Left lung (tissue), 14 donors: ENCODE measurements at regions of chr3 and their contacts with region 1.

Region 1: DNA sequence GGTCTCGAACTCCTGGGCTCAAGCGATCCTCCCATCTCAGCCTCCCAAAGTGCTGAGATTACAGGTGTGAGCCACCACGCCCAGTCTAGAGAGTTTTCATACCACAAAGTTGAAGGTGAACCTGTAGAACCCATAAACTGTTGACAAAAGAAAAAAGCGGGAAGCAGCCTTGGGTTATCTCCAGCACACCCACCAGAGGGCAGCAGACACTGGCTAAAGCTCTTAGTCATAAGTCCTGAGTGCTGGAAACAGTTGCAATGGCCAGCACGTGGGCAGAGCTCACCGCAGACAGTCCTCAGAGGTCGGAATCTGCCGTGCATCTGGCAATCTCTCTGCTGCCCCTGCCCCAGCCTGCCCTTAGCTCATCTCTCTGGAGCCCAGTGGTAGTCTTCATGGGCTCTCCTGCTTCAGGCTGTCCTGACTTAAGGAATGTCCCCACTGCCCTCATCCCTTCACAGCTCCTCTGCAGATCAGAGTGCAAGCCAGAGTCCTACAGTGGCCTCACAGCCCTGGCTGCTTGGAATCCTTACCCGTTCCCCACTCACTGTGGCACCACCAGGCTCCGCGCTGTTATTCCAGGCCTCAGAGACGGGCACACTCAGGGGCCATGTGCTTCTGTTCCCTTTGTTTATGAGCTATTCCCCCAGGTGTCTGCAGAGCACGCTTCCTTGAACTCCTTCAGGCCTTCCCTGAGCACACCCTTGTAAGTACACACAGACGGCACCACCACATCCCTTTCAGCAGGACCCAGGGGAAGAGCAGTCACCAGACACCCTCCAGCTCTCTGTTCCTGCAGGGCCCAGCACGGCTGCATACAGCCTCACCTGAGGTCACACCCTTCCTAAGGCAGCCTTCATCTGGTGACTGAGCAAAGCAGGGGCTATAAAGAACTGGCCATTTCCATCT is 8.8 kb upstream of the ELP6 start:
- DNase-seq: peak; percentile 61 to 90 (median 85)
- ATAC-seq: peak; percentile 99
- H3K4me3 ChIP-seq: no peak overlapping the region
- H3K27ac ChIP-seq: no peak overlapping the region
- H3K4me1 ChIP-seq: peaks cover 3 to 5% of the 10 kb centered on the region in 2 donors
- H3K27me3 ChIP-seq: no peaks in the 10 kb centered on the region
- CTCF ChIP-seq: peak; percentile 80 to 82

Region 2: GRCh38 chr3:47791193-47791855 is 269.0 kb after region 1 on chr3:
- intact Hi-C with region 1: loop called (anchors 2 to 10 kb)
- DNase-seq: peak in 1 of 4 donors; percentile 39
- ATAC-seq: no peak
- H3K4me3 ChIP-seq: no peak overlapping the region
- H3K27ac ChIP-seq: no peak overlapping the region
- H3K4me1 ChIP-seq: peaks cover 0 to 3% of the 10 kb centered on the region in 2 donors
- H3K27me3 ChIP-seq: no peaks in the 10 kb centered on the region
- CTCF ChIP-seq: no peak

Region 3: DNA sequence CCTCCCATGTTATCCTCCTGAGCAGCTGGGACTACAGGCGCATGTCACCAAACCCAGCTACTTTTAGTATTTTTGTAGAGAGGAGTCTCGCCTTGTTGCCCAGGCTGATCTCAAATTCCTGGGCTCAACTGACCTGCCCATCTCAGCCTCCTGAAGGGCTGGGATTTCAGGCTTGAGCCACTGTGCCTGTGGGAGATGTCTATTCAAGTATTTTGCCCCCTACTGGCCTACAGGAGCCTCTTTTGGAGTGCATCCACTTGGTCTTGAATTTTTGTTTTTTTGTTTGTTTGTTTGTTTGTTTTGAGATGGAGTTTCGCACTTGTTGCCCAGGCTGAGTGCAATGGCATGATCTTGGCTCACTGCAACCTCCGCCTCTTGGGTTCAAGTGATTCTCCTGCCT is 277.4 kb after region 1 on chr3:
- intact Hi-C with region 1: loop called in 1 of 2 experiments (anchors 10 kb)
- DNase-seq: no peak
- ATAC-seq: no peak
- H3K4me3 ChIP-seq: no peak overlapping the region
- H3K27ac ChIP-seq: no peak overlapping the region
- H3K4me1 ChIP-seq: peaks cover 0 to 20% of the 10 kb centered on the region in 2 donors
- H3K27me3 ChIP-seq: no peaks in the 10 kb centered on the region
- CTCF ChIP-seq: no peak